PC-3 (cell line): ENCODE measurements at regions of chr10 and their contacts with region 1.

Region 1: DNA sequence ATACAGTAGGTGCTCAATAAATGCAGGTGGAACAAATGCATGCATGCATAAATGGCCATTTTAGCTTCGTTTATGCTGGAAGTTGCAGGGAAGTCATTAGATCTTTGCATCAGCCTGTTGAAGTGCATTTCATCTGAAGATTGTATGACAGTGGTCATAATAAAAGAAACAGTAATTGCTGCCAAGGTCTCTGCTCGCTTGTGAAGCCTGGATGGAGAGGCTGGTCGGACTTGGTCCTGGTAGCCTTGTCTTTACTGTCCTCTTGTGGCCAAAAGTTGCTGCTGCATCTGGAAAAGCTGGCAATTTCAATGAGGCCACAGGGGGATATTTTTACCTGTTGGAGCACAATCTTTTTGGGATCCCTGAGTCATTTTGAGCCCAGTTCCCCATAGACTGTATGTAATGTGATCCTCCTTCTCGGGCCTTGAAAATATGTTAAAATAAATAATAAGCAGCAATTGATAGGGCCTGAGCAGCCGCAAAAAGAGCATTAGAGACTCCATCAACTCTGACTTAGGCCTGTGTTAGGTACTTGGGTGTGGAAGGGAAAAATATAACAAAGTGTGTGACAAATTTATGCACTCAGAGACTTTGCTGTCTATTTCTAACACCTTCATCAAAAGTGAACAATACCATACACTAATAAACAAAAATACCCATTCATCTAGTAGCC is 31.6 kb upstream of the HABP2 start:
- DNase-seq: peak; percentile 79
- ATAC-seq: peak; percentile 81
- H3K4me3 ChIP-seq: no peak overlapping the region
- H3K27ac ChIP-seq: no peak overlapping the region
- H3K4me1 ChIP-seq: 0 out of 2 replicates have a peak, but pooled peaks cover 5% of the 10 kb centered on the region
- H3K27me3 ChIP-seq: no peaks in the 10 kb centered on the region
- CTCF ChIP-seq: peak; percentile 89

Region 2: DNA sequence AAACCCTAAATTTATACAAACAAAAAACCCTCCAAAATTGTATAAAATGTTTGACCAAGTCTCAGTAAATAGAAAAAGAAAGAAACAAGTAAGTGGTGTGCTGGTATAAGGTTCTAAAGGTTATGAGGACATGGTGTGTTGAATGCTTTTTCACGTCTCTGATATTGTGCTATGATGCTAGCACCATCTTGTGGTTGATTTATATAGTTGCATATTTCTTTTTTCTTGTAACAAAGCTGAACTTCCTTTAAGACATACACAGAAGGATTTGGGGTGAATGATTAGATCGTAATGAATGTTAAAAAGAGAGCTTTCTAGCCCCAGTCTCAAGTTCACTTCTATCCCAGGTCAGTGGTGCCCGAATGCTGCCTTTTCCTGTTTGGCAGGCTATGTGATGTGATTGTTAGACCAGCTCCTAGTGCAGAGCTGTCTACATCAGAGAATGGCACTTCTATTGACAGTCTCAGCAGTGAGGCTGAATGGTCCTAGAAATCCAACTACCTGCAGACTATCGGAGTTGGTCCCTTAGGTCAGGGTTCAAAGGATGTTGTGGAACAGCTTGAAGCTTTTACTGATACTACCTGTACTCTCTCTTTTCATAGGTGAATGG is 1049.3 kb before region 1 on chr10:
- CTCF ChIA-PET with region 1: no interaction called
- POLR2A ChIA-PET with region 1: no interaction called
- intact Hi-C with region 1: loop called (anchors 10 kb)
- DNase-seq: peak; percentile 48
- ATAC-seq: peak; percentile 57
- H3K4me3 ChIP-seq: no peak overlapping the region
- H3K27ac ChIP-seq: no peak overlapping the region
- H3K4me1 ChIP-seq: 0 out of 2 replicates have a peak, but pooled peaks cover 7% of the 10 kb centered on the region
- H3K27me3 ChIP-seq: no peaks in the 10 kb centered on the region
- CTCF ChIP-seq: peak; percentile 80

Region 3: DNA sequence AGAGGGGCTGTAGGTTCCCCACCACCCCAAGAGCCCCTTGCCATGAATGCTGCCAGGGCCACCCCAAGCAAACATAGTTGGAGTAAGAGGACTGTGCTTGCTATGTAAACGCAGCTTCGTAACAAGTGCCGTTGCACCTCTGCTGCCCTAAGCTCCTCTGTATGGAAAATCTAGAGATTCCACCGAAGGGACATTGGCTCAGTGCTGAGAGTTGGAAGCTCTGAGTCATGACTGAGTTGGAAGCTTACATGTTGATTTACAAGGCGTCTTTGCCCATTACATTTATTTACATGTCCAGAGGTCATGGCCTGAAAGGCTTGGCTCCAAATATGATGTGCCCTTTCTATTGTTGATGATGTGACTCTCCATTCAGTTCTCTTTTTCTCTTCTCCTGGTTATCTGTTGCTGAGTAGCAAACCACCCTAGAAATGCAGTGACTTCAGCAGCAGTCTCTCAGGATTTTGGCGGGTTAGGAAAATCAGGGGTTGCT is 804.3 kb before region 1 on chr10:
- CTCF ChIA-PET with region 1: no interaction called
- POLR2A ChIA-PET with region 1: no interaction called
- intact Hi-C with region 1: no loop called
- DNase-seq: peak; percentile 91
- ATAC-seq: peak; percentile 86
- H3K4me3 ChIP-seq: no peak overlapping the region
- H3K27ac ChIP-seq: peak overlapping the region; percentile 75
- H3K4me1 ChIP-seq: peaks cover 51% of the 10 kb centered on the region
- H3K27me3 ChIP-seq: no peaks in the 10 kb centered on the region
- CTCF ChIP-seq: no peak

Region 4: GRCh38 chr10:113216102-113216501 is 305.2 kb before region 1 on chr10:
- CTCF ChIA-PET with region 1: no interaction called
- POLR2A ChIA-PET with region 1: no interaction called
- intact Hi-C with region 1: loop called (anchors 1 kb)
- DNase-seq: peak; percentile 50
- ATAC-seq: peak; percentile 54; the same call in 1 of the 2 replicates
- H3K4me3 ChIP-seq: no peak overlapping the region
- H3K27ac ChIP-seq: no peak overlapping the region
- H3K4me1 ChIP-seq: no peaks in the 10 kb centered on the region
- H3K27me3 ChIP-seq: no peaks in the 10 kb centered on the region
- CTCF ChIP-seq: peak; percentile 67

Region 5: GRCh38 chr10:113326160-113327111 is 194.8 kb before region 1 on chr10:
- CTCF ChIA-PET with region 1: no interaction called
- POLR2A ChIA-PET with region 1: no interaction called
- intact Hi-C with region 1: loop called (anchors 1 kb)
- DNase-seq: peak; percentile 94
- ATAC-seq: peak; percentile 95
- H3K4me3 ChIP-seq: no peak overlapping the region
- H3K27ac ChIP-seq: peak overlapping the region; percentile 87
- H3K4me1 ChIP-seq: peaks cover 22% of the 10 kb centered on the region
- H3K27me3 ChIP-seq: no peaks in the 10 kb centered on the region
- CTCF ChIP-seq: peak; percentile 27; the same call in 1 of the 2 replicates

Region 6: DNA sequence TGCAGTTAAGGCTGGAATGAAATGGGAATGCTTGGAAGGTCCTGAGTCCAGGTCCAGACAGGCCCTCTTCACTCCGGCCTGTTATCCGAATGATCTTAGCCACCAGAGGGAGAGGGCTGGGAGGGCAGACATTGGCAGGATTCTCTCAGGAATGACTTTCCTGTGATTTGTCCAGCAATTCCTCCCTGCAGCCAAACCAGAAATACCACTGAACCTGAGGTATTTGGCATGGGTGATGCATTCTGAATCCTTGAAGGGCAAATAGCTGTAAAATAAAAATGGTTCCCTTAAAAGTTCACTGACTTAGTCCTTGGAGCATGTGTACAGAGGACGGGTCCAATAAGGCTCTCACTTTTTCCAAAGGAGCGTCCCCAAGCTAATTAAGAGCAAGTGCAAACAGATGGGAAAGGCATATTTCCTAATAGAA is 45.9 kb before region 1 on chr10:
- CTCF ChIA-PET with region 1: no interaction called
- POLR2A ChIA-PET with region 1: no interaction called
- intact Hi-C with region 1: loop called (anchors 2 kb)
- DNase-seq: peak; percentile 85
- ATAC-seq: peak; percentile 76
- H3K4me3 ChIP-seq: no peak overlapping the region
- H3K27ac ChIP-seq: no peak overlapping the region
- H3K4me1 ChIP-seq: peaks cover 21% of the 10 kb centered on the region
- H3K27me3 ChIP-seq: no peaks in the 10 kb centered on the region
- CTCF ChIP-seq: peak; percentile 43

Region 7: GRCh38 chr10:113485736-113486135 is 35.5 kb before region 1 on chr10:
- CTCF ChIA-PET with region 1: no interaction called
- POLR2A ChIA-PET with region 1: no interaction called
- intact Hi-C with region 1: no loop called
- DNase-seq: no peak
- ATAC-seq: no peak
- H3K4me3 ChIP-seq: no peak overlapping the region
- H3K27ac ChIP-seq: no peak overlapping the region
- H3K4me1 ChIP-seq: peaks cover 7% of the 10 kb centered on the region; the same call in 1 of the 2 replicates
- H3K27me3 ChIP-seq: no peaks in the 10 kb centered on the region
- CTCF ChIP-seq: no peak

Region 8: GRCh38 chr10:113563306-113564088 is 42.2 kb after region 1 on chr10:
- CTCF ChIA-PET with region 1: interaction called, 7 read pairs
- POLR2A ChIA-PET with region 1: no interaction called
- intact Hi-C with region 1: loop called (anchors 2 kb)
- DNase-seq: peak; percentile 75
- ATAC-seq: peak; percentile 91
- H3K4me3 ChIP-seq: peak overlapping the region; percentile 76
- H3K27ac ChIP-seq: no peak overlapping the region
- H3K4me1 ChIP-seq: peaks cover 3% of the 10 kb centered on the region; the same call in 1 of the 2 replicates
- H3K27me3 ChIP-seq: no peaks in the 10 kb centered on the region
- CTCF ChIP-seq: peak; percentile 89

Region 9: GRCh38 chr10:113616233-113617074 is 95.2 kb after region 1 on chr10:
- CTCF ChIA-PET with region 1: no interaction called
- POLR2A ChIA-PET with region 1: no interaction called
- intact Hi-C with region 1: no loop called
- DNase-seq: peak; percentile 22
- ATAC-seq: no peak
- H3K4me3 ChIP-seq: no peak overlapping the region
- H3K27ac ChIP-seq: no peak overlapping the region
- H3K4me1 ChIP-seq: no peaks in the 10 kb centered on the region
- H3K27me3 ChIP-seq: peaks cover 69% of the 10 kb centered on the region
- CTCF ChIP-seq: peak; percentile 58